Posterior vena cava (tissue), 2 donors: ENCODE measurements at regions of chr16 and their contacts with region 1.

Region 1: GRCh38 chr16:88813220-88814142 is 1.8 kb upstream of the APRT start:
- DNase-seq: no peak

Region 2: GRCh38 chr16:88909431-88910210 is 96.1 kb after region 1 on chr16:
- intact Hi-C with region 1: loop called in 1 of 2 experiments (anchors 1 kb)
- DNase-seq: no peak